Cardiac septum (tissue), 1 donor: ENCODE measurements at regions of chr3 and their contacts with region 1.

Region 1: DNA sequence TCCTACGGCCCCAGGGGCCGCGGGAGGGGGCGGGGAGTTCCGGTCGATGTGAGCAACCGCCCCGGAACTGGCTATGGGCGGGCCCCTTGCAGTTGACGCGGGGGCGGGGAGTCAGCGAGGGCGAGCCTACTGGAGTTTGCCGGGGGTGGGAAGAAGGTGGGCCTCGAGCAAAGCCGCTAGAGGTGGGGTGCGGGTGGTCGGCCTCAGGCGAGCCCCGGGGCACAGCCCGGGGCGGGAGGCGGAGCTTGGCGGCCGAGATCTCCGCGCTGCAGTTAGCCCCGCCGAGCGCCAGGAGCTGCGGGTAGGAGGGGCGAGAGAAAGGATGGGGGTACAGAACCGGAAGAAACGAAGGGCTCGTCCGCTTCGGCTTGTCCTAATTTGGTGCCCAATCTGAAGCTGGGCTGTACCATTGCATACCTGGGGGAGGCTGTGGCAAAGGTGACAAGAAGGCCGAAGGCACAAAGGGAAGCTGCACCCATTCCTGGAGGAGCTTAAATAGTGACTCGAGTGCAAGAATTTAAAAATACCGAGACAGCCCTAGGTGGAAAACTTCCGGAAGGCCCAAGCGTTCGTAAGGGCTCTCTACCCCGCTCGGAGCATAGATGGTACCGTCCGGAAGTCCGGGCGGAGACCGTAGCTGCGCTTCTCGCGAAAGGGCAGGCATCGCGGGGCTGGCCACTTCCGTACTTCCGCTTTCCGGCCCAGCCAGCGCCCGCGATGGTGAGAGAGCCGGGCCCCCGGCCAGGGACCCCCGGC is at the starts of genes ARPC4 and TADA3:
- DNase-seq: peak; percentile 97
- total RNA-seq, gene ARPC4: 79.8 TPM
- total RNA-seq, gene TADA3: 50.1 TPM

Region 2: DNA sequence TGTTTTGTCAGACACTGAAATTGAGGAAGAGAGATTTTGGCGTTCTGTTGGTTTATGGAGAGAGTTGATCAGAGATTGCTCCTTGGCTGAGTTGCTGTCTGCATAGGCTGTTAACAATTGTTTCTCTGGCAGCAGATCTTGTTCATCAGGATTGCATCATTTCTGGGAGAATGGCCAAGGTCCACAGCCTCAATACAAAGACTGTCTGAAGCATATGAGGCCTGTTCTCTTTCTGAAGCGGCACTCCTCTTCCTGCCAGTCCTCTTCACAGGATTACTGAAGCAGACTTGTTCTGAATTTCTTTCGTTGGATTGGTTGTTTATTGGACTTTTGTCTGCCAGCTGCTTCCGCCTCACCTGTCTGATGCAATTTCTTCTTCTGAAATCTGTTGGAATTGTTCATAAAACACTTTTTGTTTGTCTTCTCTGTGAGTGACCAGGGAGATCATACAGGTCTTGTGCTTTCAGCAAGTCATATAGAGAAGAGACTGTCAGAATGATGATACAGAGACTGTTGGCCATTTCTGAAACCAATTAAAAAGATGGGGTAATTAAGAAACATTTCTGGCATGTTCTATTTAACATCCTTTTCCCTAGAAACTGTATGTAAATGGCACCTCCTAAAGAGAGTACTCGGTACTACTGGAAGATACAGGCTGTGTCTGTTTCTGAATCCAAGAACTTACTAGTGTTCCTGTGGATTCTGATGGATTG is 369.7 kb before region 1 on chr3:
- intact Hi-C with region 1: no loop called
- DNase-seq: no peak

Region 3: GRCh38 chr3:9731206-9732079 is 61.1 kb before region 1 on chr3 and contains the start of gene BRPF1:
- intact Hi-C with region 1: loop called (anchors 5 kb)
- DNase-seq: peak; percentile 100
- total RNA-seq, gene BRPF1: 10.6 TPM

Region 4: GRCh38 chr3:9809615-9810432 is 17.2 kb after region 1 on chr3 and contains the start of gene TTLL3:
- intact Hi-C with region 1: loop called (anchors 1 kb)
- DNase-seq: peak; percentile 89
- total RNA-seq, gene TTLL3: 19.5 TPM

Region 5: DNA sequence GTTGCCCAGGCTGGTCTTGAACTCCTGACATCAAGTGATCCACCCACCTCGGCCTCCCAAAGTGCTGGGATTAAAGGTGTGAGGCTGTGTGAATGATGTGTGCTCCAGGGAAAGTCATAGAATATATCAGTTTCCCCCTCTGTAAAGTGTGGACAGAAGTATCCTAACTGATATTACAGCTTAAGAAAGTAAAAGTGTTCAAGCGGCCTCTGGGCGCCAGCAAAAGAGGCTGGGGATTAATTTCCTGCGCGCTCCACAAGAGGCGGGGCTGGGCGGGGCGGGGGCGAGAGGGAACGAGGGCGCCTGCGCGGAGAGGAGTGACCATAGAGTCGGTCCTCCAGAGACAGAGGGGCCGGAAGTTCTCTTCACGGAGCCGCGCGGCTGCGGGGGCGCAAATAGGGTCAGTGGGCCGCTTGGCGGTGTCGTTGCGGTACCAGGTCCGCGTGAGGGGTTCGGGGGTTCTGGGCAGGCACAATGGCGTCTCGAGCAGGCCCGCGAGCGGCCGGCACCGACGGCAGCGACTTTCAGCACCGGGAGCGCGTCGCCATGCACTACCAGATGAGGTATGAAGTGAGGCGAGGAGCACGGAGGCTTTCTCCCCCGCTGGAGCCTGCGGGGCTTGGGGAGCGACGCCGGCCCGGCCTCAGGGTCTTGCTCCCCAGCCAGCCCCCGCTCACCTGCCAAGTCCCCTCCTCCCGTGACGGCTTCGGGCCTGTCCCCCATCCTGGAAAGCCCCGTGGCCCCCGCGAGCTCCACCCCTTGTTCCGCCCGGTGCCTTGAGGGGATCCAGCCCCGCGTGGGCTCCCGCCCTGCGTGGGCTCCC is 97.9 kb after region 1 on chr3 and contains the start of gene JAGN1:
- intact Hi-C with region 1: loop called (anchors 5 kb)
- DNase-seq: peak; percentile 95
- total RNA-seq, gene JAGN1: 17.3 TPM